Panc1 (cell line): ENCODE measurements at regions of chr5 and their contacts with region 1.

Region 1: DNA sequence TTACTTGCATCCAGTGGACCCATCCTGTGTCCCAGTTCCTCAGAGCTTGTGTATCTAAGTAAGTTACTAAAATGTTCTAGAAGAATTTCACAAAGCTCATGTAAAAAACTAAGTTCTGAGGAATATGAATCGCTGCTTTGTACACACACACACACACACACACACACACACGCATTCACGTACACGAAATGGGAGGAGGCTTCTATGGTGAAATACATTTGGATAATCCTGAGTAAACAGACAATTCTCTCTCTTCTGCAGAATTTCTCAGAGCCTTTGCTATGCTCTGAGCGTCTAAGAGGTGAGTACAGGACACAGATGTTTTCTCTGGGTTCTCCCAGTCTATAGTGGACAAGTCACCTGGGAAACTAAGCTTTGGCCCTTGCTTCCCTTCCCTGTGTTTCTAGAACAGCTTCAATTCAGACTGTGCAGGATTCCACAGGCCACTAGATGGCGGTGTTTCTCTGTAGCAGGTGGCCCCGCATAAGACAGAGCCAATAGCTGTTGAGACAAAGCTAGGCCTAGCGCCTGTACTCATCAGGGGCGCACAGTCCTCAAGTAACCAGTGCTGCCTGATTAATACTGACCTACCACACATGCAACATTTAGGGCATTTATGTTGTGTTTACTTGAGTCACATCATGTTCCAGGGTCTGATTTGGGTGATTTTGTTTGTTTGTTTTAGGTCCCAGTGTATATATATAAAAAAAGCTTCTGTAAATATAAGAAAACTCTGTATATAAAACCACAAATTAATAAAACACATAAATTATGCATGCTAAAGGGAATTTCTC is 114.8 kb downstream of the LIFR start:
- DNase-seq: peak; percentile 89
- ATAC-seq: peak; percentile 94
- H3K4me3 ChIP-seq: no peak overlapping the region
- H3K27ac ChIP-seq: no peak overlapping the region; the same call in 1 of the 2 replicates
- H3K4me1 ChIP-seq: 0 out of 2 replicates have a peak, but pooled peaks cover 5% of the 10 kb centered on the region
- H3K27me3 ChIP-seq: no peaks in the 10 kb centered on the region
- CTCF ChIP-seq: peak; percentile 96

Region 2: DNA sequence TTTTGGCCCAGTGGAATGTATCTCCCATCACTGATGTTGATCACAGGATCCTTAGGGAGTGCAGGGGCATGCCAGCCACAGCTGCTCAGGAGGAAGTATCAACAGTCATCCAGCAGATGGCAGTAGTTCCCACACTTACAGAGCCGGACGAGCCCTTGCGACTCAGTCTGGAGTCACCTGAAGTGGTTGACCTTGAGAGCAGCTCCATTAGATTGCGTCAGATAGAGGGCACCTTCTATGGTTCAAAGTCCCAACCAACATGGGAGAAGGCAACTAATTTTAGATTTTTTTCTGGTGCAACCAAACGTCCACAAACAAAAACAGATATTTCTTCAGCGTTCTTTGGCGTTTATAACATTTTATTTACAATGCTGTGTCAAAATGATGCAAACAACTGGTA is 58.8 kb before region 1 on chr5:
- CTCF ChIA-PET with region 1: interaction called, 16 read pairs
- POLR2A ChIA-PET with region 1: no interaction called
- in situ Hi-C with region 1: no loop called
- intact Hi-C with region 1: no loop called
- DNase-seq: peak; percentile 76
- ATAC-seq: peak; percentile 99
- H3K4me3 ChIP-seq: no peak overlapping the region
- H3K27ac ChIP-seq: no peak overlapping the region; the same call in 1 of the 2 replicates
- H3K4me1 ChIP-seq: no peaks in the 10 kb centered on the region
- H3K27me3 ChIP-seq: peaks cover 13% of the 10 kb centered on the region
- CTCF ChIP-seq: peak; percentile 90

Region 3: GRCh38 chr5:38431242-38431853 is 10.3 kb before region 1 on chr5:
- CTCF ChIA-PET with region 1: interaction called, 12 read pairs
- POLR2A ChIA-PET with region 1: no interaction called
- in situ Hi-C with region 1: no loop called
- intact Hi-C with region 1: no loop called
- DNase-seq: no peak
- ATAC-seq: no peak
- H3K4me3 ChIP-seq: no peak overlapping the region
- H3K27ac ChIP-seq: no peak overlapping the region
- H3K4me1 ChIP-seq: no peaks in the 10 kb centered on the region
- H3K27me3 ChIP-seq: peaks cover 11% of the 10 kb centered on the region
- CTCF ChIP-seq: no peak

Region 4: DNA sequence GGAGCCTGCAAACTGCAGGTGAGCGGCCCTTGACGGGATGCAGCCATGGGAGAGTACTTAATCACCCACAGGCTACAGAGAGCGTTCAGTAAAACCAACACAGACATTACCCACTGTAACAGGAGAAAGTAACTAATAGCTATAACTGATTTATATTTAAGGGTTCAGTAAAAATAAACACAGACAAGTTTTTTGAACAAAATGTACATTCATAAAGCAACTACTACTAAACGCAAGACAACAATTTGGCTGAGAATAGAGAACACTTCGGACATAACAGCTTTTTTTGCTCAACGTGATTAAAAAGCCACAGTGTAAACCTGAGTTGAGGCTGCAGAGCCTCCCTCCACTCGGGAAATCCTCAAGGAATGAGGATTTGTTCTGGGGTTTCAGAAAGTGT is 53.1 kb after region 1 on chr5:
- CTCF ChIA-PET with region 1: interaction called, 15 read pairs
- POLR2A ChIA-PET with region 1: no interaction called
- in situ Hi-C with region 1: no loop called
- intact Hi-C with region 1: no loop called
- DNase-seq: no peak
- ATAC-seq: no peak
- H3K4me3 ChIP-seq: no peak overlapping the region
- H3K27ac ChIP-seq: no peak overlapping the region
- H3K4me1 ChIP-seq: no peaks in the 10 kb centered on the region
- H3K27me3 ChIP-seq: no peaks in the 10 kb centered on the region
- CTCF ChIP-seq: no peak

Region 5: GRCh38 chr5:38551030-38552017 is 109.7 kb after region 1 on chr5:
- CTCF ChIA-PET with region 1: interaction called, 10 read pairs
- POLR2A ChIA-PET with region 1: interaction called, 3 read pairs
- in situ Hi-C with region 1: no loop called
- intact Hi-C with region 1: loop called (anchors 2 kb)
- DNase-seq: no peak
- ATAC-seq: peak; percentile 69
- H3K4me3 ChIP-seq: no peak overlapping the region; a peak in 1 of 4 replicates
- H3K27ac ChIP-seq: peak overlapping the region; percentile 86
- H3K4me1 ChIP-seq: peaks cover 81% of the 10 kb centered on the region
- H3K27me3 ChIP-seq: no peaks in the 10 kb centered on the region
- CTCF ChIP-seq: peak; percentile 82

Region 6: GRCh38 chr5:38922199-38922598 is 480.5 kb after region 1 on chr5:
- CTCF ChIA-PET with region 1: interaction called, 11 read pairs
- POLR2A ChIA-PET with region 1: no interaction called
- in situ Hi-C with region 1: no loop called
- intact Hi-C with region 1: loop called (anchors 5 kb)
- DNase-seq: peak; percentile 45
- ATAC-seq: peak; percentile 95
- H3K4me3 ChIP-seq: no peak overlapping the region
- H3K27ac ChIP-seq: no peak overlapping the region
- H3K4me1 ChIP-seq: no peaks in the 10 kb centered on the region
- H3K27me3 ChIP-seq: no peaks in the 10 kb centered on the region
- CTCF ChIP-seq: peak; percentile 93